Ascending aorta (tissue), 2 donors: ENCODE measurements at regions of chr1 and their contacts with region 1.

Region 1: DNA sequence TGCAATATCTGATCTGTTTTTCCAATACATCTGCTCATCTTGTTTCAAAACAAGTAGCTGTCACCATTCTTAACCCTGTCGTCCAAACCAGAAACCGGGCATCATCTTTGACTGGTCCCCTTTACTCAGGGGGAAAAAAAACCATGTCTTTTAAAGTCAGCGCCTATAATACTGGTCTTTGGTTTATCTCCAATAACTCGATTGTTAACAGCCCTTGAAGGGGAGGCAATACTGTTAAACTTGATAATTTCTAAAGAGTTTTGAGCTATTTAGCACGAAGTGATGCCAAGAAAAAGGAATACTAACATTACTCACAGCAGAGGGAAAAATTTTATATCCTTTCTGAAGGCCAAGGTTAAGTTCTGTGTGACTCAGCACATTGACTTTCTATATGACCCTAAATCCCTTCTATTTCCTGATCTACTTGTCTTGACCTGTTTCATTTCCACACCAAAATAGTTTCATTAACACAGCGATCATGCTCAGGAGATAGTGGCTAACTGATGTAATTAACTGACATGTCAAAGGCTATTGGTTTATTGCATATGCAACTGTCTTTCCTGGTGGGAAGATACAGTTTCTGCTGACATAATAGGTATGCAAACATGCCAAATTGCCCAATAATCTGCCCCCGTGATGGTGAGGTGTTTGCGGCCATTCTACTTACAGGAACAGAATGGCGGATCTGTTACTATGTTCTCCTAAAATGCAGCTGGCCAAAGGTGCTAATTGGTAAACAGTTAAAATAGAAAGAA is 59.1 kb downstream of the NFIA start:
- DNase-seq: no peak
- H3K4me3 ChIP-seq: peak overlapping the region; percentile 6 to 20
- H3K27ac ChIP-seq: peak overlapping the region; percentile 62 to 79
- H3K4me1 ChIP-seq: peaks cover 3 to 59% of the 10 kb centered on the region in 2 donors
- H3K27me3 ChIP-seq: no peaks in the 10 kb centered on the region
- CTCF ChIP-seq: no peak

Region 2: DNA sequence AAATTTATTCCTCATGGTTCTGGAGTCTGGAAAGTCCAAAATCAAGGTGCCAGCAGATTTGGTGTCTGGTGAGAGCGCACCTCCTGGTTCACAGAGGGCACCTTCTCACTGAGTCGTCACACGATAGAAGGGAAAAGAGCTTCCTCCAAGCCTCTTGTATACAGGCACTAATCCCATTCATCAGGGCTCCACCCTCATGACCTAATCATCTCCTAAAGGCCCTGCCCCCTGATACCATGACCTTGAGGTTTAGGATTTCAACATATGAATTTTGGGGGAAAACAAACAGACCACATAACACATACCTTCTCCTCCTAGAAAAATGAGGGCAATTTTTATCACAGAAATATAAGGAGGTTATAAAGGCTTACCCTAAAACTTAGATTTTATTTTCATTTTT is 147.1 kb before region 1 on chr1:
- intact Hi-C with region 1: no loop called
- DNase-seq: no peak
- H3K4me3 ChIP-seq: no peak overlapping the region
- H3K27ac ChIP-seq: peak overlapping the region; percentile 31 to 86
- H3K4me1 ChIP-seq: peaks cover 3 to 40% of the 10 kb centered on the region in 2 donors
- H3K27me3 ChIP-seq: no peaks in the 10 kb centered on the region
- CTCF ChIP-seq: no peak

Region 3: DNA sequence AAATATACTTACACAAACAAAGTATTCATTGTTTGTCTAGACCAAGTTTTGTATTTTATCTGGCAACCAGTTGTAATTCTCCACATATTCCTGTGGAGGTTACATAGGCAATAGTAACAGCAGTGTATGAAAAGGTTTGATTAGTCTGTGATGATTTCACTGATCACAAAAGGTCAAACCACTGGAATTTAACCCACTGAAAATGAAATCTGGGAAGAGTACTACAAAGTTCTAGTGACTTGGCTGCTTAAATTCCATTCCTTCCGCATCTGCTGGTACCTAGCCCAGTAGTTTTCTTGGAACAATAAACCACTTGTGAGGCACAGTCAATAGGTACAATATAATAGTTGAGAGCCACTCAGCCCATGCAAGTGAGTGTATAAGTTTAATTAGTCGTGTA is 146.3 kb after region 1 on chr1:
- intact Hi-C with region 1: loop called (anchors 5 kb)
- DNase-seq: no peak
- H3K4me3 ChIP-seq: no peak overlapping the region
- H3K27ac ChIP-seq: peak overlapping the region; percentile 69 to 76
- H3K4me1 ChIP-seq: peaks cover 4 to 54% of the 10 kb centered on the region in 2 donors
- H3K27me3 ChIP-seq: no peaks in the 10 kb centered on the region
- CTCF ChIP-seq: no peak